CD4-positive, alpha-beta T cell (primary cell): ENCODE measurements at regions of chr9 and their contacts with region 1.

Region 1: DNA sequence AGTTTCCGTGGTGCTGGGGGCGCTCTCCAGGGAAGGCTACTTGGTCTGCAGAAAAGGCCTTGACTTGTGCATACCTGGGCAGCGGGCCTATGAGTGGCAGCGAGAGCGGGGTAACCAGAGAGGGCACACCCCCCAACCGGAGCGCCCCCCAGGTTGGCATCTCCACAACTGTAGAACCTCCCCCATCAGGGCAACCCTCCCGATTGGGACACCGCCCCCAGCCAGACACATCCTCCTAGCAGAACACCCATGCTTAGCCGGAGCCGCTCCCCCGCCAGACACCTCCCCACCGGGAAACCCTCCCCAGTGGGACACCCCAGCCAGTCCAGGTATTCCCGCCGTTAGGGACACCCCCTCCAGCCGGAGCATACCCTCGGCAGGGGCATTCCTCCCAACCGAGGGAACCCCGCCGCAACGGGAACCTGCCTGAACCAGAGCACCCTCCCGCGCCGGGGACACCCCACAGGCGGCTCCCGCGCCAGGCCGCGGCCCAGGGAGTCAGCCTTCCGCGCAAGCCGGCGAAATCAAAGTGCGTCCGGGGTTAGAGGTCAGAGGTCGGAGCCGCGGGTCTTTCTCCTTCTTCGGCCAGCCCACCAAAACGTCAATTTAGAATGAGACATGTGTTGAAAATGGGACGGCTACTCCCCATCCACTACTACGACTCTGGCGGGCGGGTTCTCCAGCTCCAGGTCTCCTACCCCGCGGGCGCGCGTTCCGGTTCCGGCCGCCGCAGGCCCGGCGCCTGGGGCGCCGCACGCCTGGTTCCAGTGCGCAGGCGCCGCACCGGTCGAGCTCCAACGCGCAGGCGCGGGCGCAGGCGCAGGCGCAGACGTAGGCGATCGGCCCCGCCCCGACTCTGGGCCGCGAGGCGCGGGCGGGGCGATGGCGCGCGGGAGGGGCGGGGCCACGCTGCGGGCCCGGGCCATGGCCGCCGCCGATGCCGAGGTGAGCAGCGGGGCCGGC is at the start of gene EHMT1:
- DNase-seq: peak; percentile 75 to 97 (median 90)
- ATAC-seq: peak; percentile 82
- H3K4me3 ChIP-seq: peak within 1 kb of the TSS; percentile 95
- H3K4me3 Mint-ChIP-seq: peak within 1 kb of the TSS; percentile 95
- H3K27ac ChIP-seq: peak within 1 kb of the TSS; percentile 90 to 96
- H3K27ac Mint-ChIP-seq: peak within 1 kb of the TSS; percentile 93
- H3K4me1 ChIP-seq: peaks cover 37% of the 10 kb centered on the region
- H3K4me1 Mint-ChIP-seq: peaks cover 42% of the 10 kb centered on the region
- H3K27me3 ChIP-seq: no peaks in the 10 kb centered on the region
- H3K27me3 Mint-ChIP-seq: no peaks in the 10 kb centered on the region
- CTCF ChIP-seq: no peak
- total RNA-seq, gene EHMT1: 80.6 to 87.8 TPM

Region 2: DNA sequence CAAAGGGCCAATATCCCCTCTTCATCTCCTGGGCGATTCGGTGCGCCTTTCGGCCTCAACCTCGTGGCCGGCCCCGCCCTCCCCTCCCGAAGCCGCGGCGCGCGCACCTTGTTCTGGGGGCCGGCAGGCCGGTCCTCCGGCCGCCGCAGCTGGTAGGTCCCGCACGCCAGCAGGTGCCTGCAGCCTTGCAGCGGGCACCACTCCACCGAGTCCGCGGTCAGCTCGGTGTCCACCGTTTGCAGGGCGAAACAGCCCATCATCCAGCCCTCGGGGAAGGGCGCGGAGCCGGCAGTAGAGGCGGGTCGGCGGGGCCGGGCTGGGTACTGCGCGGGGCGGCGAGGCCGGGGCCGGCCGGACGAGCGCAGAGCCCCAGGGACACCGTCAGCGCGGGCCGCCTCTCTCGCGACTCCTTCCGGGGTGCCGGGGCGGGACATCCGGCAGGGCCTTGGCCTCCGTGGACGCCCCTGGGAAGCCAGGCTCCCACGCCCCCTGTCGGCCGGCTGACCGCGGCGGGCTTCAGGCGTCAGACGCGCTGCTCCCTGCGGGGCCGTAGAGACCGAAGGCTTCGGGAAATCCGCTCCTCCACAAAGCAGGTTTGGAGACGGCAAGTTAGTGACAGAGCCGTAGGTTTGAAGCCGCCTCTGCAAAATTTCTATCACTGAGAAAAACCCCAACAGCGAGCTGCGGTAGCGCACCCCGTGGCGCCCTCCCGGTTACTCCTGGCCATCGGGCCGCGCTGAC is 39.7 kb before region 1 on chr9 and contains the start of gene DPH7:
- CTCF ChIA-PET with region 1: interaction called, 5 read pairs
- POLR2A ChIA-PET with region 1: interaction called, 4 read pairs
- intact Hi-C with region 1: loop called in 1 of 2 experiments (anchors 1 kb)
- DNase-seq: peak; percentile 88 to 98 (median 94)
- ATAC-seq: peak; percentile 97
- H3K4me3 ChIP-seq: peak within 1 kb of the TSS; percentile 63
- H3K4me3 Mint-ChIP-seq: peak within 1 kb of the TSS; percentile 87
- H3K27ac ChIP-seq: peak within 1 kb of the TSS in 1 of 2 donors; percentile 39
- H3K27ac Mint-ChIP-seq: peak within 1 kb of the TSS; percentile 71
- H3K4me1 ChIP-seq: peaks cover 36% of the 10 kb centered on the region
- H3K4me1 Mint-ChIP-seq: peaks cover 30% of the 10 kb centered on the region
- H3K27me3 ChIP-seq: no peaks in the 10 kb centered on the region
- H3K27me3 Mint-ChIP-seq: no peaks in the 10 kb centered on the region
- CTCF ChIP-seq: peak; percentile 94
- total RNA-seq, gene DPH7: 36.4 to 36.8 TPM

Region 3: GRCh38 chr9:137590462-137591383 is 27.7 kb before region 1 on chr9 and contains the start of gene ZMYND19:
- CTCF ChIA-PET with region 1: no interaction called
- POLR2A ChIA-PET with region 1: interaction called, 4 read pairs
- intact Hi-C with region 1: loop called in 1 of 2 experiments (anchors 1 kb)
- DNase-seq: peak; percentile 79 to 97 (median 90)
- ATAC-seq: peak; percentile 97
- H3K4me3 ChIP-seq: peak within 1 kb of the TSS; percentile 61
- H3K4me3 Mint-ChIP-seq: peak within 1 kb of the TSS; percentile 98
- H3K27ac ChIP-seq: no peak within 1 kb of the TSS
- H3K27ac Mint-ChIP-seq: peak within 1 kb of the TSS; percentile 59
- H3K4me1 ChIP-seq: peaks cover 21% of the 10 kb centered on the region
- H3K4me1 Mint-ChIP-seq: peaks cover 17% of the 10 kb centered on the region
- H3K27me3 ChIP-seq: no peaks in the 10 kb centered on the region
- H3K27me3 Mint-ChIP-seq: no peaks in the 10 kb centered on the region
- CTCF ChIP-seq: no peak
- total RNA-seq, gene ZMYND19: 8.6 to 11.3 TPM

Region 4: GRCh38 chr9:137632230-137633161 is 14.1 kb after region 1 on chr9:
- CTCF ChIA-PET with region 1: interaction called, 4 read pairs
- POLR2A ChIA-PET with region 1: interaction called, 21 read pairs
- intact Hi-C with region 1: no loop called
- DNase-seq: no peak
- ATAC-seq: no peak
- H3K4me3 ChIP-seq: no peak overlapping the region
- H3K4me3 Mint-ChIP-seq: no peak overlapping the region
- H3K27ac ChIP-seq: no peak overlapping the region
- H3K27ac Mint-ChIP-seq: peak overlapping the region; percentile 10
- H3K4me1 ChIP-seq: peaks cover 52% of the 10 kb centered on the region
- H3K4me1 Mint-ChIP-seq: peaks cover 68% of the 10 kb centered on the region
- H3K27me3 ChIP-seq: no peaks in the 10 kb centered on the region
- H3K27me3 Mint-ChIP-seq: no peaks in the 10 kb centered on the region
- CTCF ChIP-seq: no peak

Region 5: DNA sequence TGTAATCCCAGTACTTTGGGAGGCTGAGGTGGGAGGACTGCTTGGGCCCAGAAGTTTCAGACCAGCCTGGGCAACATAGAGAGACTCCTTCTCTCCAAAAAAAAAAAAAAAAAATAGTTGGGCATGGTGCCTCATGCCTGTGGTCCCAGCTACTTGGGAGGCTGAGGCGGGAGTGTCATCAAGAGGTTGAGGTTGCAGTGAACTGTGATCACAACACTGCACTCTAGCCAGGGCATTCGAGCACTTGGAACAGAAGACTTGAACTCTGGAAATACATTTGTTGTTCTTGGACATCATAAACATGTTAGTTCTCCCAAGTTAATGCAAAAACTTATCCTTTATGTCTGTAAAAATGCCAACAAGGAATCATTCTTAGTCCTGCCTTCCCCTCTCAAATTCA is 30.0 kb after region 1 on chr9:
- CTCF ChIA-PET with region 1: no interaction called
- POLR2A ChIA-PET with region 1: no interaction called
- intact Hi-C with region 1: no loop called
- DNase-seq: no peak
- ATAC-seq: no peak
- H3K4me3 ChIP-seq: no peak overlapping the region
- H3K4me3 Mint-ChIP-seq: no peak overlapping the region
- H3K27ac ChIP-seq: no peak overlapping the region
- H3K27ac Mint-ChIP-seq: no peak overlapping the region
- H3K4me1 ChIP-seq: peaks cover 21% of the 10 kb centered on the region
- H3K4me1 Mint-ChIP-seq: peaks cover 43% of the 10 kb centered on the region
- H3K27me3 ChIP-seq: no peaks in the 10 kb centered on the region
- H3K27me3 Mint-ChIP-seq: no peaks in the 10 kb centered on the region
- CTCF ChIP-seq: no peak